ENCODE measurements at regions of chr2 and their contacts with region 1.

Region 1: GRCh38 chr2:219459460-219460311 is 25.0 kb downstream of the SPEG start:
- DNase-seq: peak; percentile 72
- H3K4me3 Mint-ChIP-seq: no peak overlapping the region
- H3K27ac Mint-ChIP-seq: no peak overlapping the region
- H3K4me1 Mint-ChIP-seq: peaks cover 10% of the 10 kb centered on the region
- H3K27me3 Mint-ChIP-seq: no peaks in the 10 kb centered on the region
- CTCF ChIP-seq: peak; percentile 93

Region 2: GRCh38 chr2:219430633-219431615 is 28.8 kb before region 1 on chr2:
- CTCF ChIA-PET with region 1: no interaction called
- intact Hi-C with region 1: no loop called
- DNase-seq: peak; percentile 40
- H3K4me3 Mint-ChIP-seq: no peak overlapping the region
- H3K27ac Mint-ChIP-seq: no peak overlapping the region
- H3K4me1 Mint-ChIP-seq: no peaks in the 10 kb centered on the region
- H3K27me3 Mint-ChIP-seq: peaks cover 19% of the 10 kb centered on the region
- CTCF ChIP-seq: no peak

Region 3: GRCh38 chr2:219441451-219442255 is 18.0 kb before region 1 on chr2:
- CTCF ChIA-PET with region 1: interaction called, 15 read pairs
- intact Hi-C with region 1: no loop called
- DNase-seq: peak; percentile 58
- H3K4me3 Mint-ChIP-seq: peak overlapping the region; percentile 75
- H3K27ac Mint-ChIP-seq: peak overlapping the region; percentile 48
- H3K4me1 Mint-ChIP-seq: peaks cover 21% of the 10 kb centered on the region
- H3K27me3 Mint-ChIP-seq: peaks cover 27% of the 10 kb centered on the region
- CTCF ChIP-seq: no peak

Measured in Calu3 (cell line).